A673 (cell line): ENCODE measurements at regions of chr6 and their contacts with region 1.

Region 1: DNA sequence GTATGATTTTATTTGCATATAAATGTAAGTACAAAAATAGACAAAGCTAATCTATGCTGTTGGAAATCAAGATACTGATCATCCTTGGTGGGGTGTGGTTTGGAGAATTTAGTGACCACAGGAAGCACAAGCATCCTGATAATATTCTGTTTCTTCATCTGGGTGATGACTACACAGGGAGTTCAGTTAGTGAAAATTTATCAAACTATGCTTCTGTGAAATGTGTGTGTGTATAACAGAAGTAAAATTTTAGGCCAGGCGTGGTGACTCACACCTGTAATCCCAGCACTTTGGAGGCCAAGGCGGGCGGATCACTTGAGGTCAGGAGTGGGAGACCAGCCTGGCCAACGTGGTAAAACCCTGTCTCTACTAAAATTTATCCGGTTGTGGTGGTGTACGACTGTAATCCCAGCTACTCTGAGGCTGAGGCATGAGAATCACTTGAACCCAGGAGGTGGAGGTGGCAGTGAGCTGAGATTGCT is 20.6 kb downstream of the ENPP3 start:
- DNase-seq: no peak
- H3K4me3 ChIP-seq: no peak overlapping the region
- H3K27ac ChIP-seq: no peak overlapping the region
- H3K4me1 ChIP-seq: no peaks in the 10 kb centered on the region
- H3K27me3 ChIP-seq: no peaks in the 10 kb centered on the region
- CTCF ChIP-seq: no peak

Region 2: DNA sequence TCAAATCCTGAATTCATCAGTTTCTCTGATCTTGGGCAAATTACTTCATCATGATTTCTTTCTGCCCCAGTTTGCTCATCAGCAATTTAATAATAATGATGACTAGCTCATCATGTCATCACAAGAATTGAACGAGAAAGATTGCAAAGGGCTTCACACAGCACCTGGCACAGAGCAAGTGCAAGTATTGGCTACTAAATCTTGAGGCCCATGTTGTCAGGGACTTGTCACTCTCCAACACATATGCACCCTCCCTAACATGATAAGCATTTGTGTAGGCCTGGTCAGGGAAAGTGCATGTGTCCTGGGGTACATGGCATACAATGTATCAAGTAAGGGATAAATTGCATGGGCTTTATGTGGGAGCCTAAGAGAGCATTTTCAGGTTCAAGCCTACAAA is 824.1 kb before region 1 on chr6:
- CTCF ChIA-PET with region 1: no interaction called
- POLR2A ChIA-PET with region 1: interaction called, 11 read pairs
- intact Hi-C with region 1: no loop called
- DNase-seq: no peak
- H3K4me3 ChIP-seq: no peak overlapping the region
- H3K27ac ChIP-seq: no peak overlapping the region
- H3K4me1 ChIP-seq: no peaks in the 10 kb centered on the region
- H3K27me3 ChIP-seq: no peaks in the 10 kb centered on the region
- CTCF ChIP-seq: no peak

Region 3: DNA sequence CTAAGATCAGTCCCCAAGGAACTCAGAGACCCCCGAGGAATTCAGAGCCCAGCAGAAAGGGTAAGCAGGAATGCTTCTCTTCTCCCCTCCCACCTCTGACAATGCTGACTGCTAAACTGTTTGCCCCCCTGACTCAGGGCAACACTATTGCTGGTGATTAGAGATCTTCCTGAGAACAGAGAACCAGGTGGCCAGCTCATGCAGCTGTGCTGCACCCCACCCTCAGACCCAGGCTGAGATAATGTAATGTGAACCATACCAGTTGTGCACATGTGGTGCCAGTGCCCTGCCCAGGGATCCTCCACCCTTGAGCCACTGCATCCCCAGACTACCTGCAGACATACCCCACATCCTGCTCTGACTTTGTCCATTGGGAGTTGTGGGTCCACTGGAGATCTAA is 223.7 kb before region 1 on chr6:
- CTCF ChIA-PET with region 1: no interaction called
- POLR2A ChIA-PET with region 1: no interaction called
- intact Hi-C with region 1: no loop called
- DNase-seq: no peak
- H3K4me3 ChIP-seq: no peak overlapping the region
- H3K27ac ChIP-seq: no peak overlapping the region
- H3K4me1 ChIP-seq: no peaks in the 10 kb centered on the region
- H3K27me3 ChIP-seq: no peaks in the 10 kb centered on the region
- CTCF ChIP-seq: no peak